Activated CD4-positive, alpha-beta memory T cell treated with anti-CD3 and anti-CD28 coated beads, Interleukin-2, amount 10 ng/mL, durations not matched to agents 7 days and 5 days (primary cell): ENCODE measurements at regions of chr1 and their contacts with region 1.

Region 1: DNA sequence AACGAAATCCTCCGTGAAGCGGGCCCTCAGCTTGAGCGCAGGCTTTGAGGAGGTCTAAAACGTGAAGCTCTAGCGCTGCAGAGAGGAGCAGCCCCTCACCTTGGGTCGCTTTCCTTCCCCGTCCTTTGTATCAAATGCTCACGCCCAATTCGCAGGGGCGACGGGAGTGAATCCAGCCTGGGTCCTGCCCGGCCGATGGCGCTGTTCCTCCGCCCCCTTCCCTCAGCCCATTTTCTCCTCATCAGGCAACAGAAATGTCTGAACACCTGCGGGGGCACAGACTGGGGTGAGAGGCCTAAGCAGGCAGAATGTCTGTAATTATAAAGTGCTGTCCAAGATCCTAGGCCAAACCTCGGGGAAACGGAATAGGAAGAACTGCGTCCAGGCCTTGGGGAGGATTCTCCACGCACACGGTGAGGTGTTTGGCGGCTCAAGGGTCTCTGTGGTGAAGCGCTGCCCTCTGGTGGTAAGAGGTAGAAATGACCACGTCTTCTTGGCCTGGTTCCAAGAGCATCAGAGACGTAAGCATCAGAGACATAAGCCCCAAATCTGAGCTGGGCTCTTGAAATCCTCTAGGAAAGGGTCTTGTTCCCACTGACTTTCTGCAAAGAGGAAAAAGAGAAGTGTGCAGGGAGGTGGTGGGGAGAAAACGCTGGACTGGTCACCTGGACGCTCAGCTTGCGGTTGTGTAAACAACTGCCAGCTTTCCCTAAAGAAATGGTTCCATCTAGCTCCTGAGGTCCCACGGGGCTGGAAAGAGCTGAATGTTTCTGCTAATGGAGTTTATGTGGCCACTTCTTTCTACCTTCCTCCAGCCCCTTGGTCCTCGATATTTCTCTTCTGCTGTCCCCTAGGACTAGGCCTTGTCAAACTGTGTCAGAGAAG is 92.1 kb upstream of the CD53 start:
- DNase-seq: peak; percentile 80
- H3K4me3 Mint-ChIP-seq: no peak overlapping the region
- H3K27ac Mint-ChIP-seq: no peak overlapping the region
- H3K4me1 Mint-ChIP-seq: peaks cover 35% of the 10 kb centered on the region
- H3K27me3 Mint-ChIP-seq: peaks cover 3% of the 10 kb centered on the region

Region 2: DNA sequence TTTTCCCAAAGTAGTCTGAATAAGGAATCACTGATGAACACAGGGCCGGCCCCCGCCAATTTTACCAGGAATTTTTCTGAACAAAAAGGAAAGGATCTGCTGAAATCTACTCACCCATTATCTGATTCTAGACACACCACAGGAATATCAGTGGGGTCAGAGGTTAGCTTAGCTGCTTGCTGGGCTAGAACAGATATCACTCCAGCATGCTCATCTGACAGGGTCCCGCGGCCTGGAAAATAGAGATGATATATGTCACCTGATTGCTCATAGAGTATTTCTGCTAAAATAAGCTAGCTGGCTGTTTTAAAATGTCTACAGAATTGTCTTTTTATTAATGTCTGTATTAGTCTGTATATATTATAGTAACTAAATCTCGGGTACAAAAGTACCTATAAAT is 377.0 kb before region 1 on chr1:
- CTCF ChIA-PET with region 1: no interaction called
- POLR2A ChIA-PET with region 1: no interaction called
- DNase-seq: no peak
- H3K4me3 Mint-ChIP-seq: no peak overlapping the region
- H3K27ac Mint-ChIP-seq: no peak overlapping the region
- H3K4me1 Mint-ChIP-seq: peaks cover 24% of the 10 kb centered on the region
- H3K27me3 Mint-ChIP-seq: no peaks in the 10 kb centered on the region

Region 3: GRCh38 chr1:110524311-110525251 is 256.3 kb before region 1 on chr1:
- CTCF ChIA-PET with region 1: interaction called, 52 read pairs
- POLR2A ChIA-PET with region 1: no interaction called
- DNase-seq: peak; percentile 62
- H3K4me3 Mint-ChIP-seq: no peak overlapping the region
- H3K27ac Mint-ChIP-seq: no peak overlapping the region
- H3K4me1 Mint-ChIP-seq: no peaks in the 10 kb centered on the region
- H3K27me3 Mint-ChIP-seq: peaks cover 53% of the 10 kb centered on the region

Region 4: GRCh38 chr1:110605901-110606656 is 174.8 kb before region 1 on chr1 and contains the start of gene KCNA2:
- CTCF ChIA-PET with region 1: interaction called, 16 read pairs
- POLR2A ChIA-PET with region 1: no interaction called
- DNase-seq: peak; percentile 15
- H3K4me3 Mint-ChIP-seq: peak within 1 kb of the TSS; percentile 68
- H3K27ac Mint-ChIP-seq: no peak within 1 kb of the TSS
- H3K4me1 Mint-ChIP-seq: peaks cover 41% of the 10 kb centered on the region
- H3K27me3 Mint-ChIP-seq: peaks cover 43% of the 10 kb centered on the region
- total RNA-seq, gene KCNA2: 5.9 to 6.6 TPM

Region 5: GRCh38 chr1:110630839-110631663 is 149.8 kb before region 1 on chr1:
- CTCF ChIA-PET with region 1: interaction called, 18 read pairs
- POLR2A ChIA-PET with region 1: interaction called, 5 read pairs
- DNase-seq: peak; percentile 92
- H3K4me3 Mint-ChIP-seq: no peak overlapping the region
- H3K27ac Mint-ChIP-seq: no peak overlapping the region
- H3K4me1 Mint-ChIP-seq: peaks cover 68% of the 10 kb centered on the region
- H3K27me3 Mint-ChIP-seq: no peaks in the 10 kb centered on the region

Region 6: DNA sequence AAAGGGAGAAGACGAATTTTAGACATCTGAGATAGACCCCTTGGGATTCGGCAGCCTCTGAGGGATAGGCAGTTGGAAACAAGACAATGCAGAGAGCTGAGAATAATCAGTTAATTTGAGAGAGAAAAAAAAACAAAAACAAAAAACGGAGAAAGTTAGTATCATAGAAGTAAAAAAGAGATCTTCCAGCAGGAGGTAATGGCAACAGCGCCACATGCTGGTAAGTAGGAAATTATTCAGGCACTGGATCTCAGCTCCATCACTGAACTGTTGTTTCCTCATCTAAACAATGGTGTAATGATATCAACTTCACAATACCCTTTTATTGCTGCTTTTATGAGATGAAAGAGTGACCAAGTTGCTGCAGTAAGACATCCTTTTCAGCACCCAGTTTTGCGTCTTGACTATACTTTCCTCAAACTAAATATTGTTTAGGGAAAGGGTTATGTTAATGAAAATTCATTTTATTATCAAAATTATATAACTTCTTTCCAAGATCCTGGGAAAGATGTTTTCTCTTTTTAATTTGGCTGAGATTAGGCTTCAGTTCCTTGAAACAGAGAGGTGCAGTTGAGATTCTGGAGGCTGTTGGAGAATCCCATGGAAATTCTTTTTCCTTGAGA is 14.7 kb before region 1 on chr1:
- CTCF ChIA-PET with region 1: interaction called, 40 read pairs
- POLR2A ChIA-PET with region 1: interaction called, 3 read pairs
- DNase-seq: peak; percentile 66
- H3K4me3 Mint-ChIP-seq: no peak overlapping the region
- H3K27ac Mint-ChIP-seq: no peak overlapping the region
- H3K4me1 Mint-ChIP-seq: peaks cover 9% of the 10 kb centered on the region
- H3K27me3 Mint-ChIP-seq: peaks cover 19% of the 10 kb centered on the region

Region 7: DNA sequence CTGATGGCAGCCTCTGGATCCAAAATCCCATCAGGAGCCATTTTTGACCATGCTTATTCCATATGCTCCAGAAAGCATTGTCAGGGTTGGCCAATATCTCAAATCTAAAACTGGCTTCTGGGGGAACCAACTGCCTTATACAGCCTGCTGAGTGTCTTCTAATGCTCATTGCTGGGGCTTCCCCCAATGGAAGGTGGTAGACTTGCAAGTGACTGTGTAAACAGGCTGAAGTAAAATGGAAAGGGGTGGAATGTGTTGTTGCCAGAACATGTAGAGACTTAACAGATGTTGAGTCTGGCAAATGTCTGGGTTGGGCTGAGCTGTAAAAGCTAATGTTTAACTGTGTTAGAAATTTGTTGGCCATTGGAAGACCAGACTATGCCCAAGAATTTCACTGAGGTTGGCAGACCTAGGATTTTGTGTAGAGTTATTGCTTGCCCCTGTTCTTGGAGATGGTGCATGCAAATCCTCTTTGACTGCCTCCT is 205.6 kb after region 1 on chr1:
- CTCF ChIA-PET with region 1: interaction called, 11 read pairs
- POLR2A ChIA-PET with region 1: no interaction called
- DNase-seq: no peak
- H3K4me3 Mint-ChIP-seq: no peak overlapping the region
- H3K27ac Mint-ChIP-seq: no peak overlapping the region
- H3K4me1 Mint-ChIP-seq: peaks cover 21% of the 10 kb centered on the region
- H3K27me3 Mint-ChIP-seq: peaks cover 8% of the 10 kb centered on the region